Activated CD4-positive, alpha-beta memory T cell treated with anti-CD3 and anti-CD28 coated beads, Interleukin-2, amount 10 ng/mL, durations not matched to agents 7 days and 5 days (primary cell): ENCODE measurements at regions of chr6 and their contacts with region 1.

Region 1: GRCh38 chr6:125834348-125834747 is 43.6 kb downstream of the NCOA7 start:
- DNase-seq: no peak
- H3K4me3 Mint-ChIP-seq: no peak overlapping the region
- H3K27ac Mint-ChIP-seq: peak overlapping the region; percentile 11
- H3K4me1 Mint-ChIP-seq: peaks cover 53% of the 10 kb centered on the region
- H3K27me3 Mint-ChIP-seq: no peaks in the 10 kb centered on the region

Region 2: DNA sequence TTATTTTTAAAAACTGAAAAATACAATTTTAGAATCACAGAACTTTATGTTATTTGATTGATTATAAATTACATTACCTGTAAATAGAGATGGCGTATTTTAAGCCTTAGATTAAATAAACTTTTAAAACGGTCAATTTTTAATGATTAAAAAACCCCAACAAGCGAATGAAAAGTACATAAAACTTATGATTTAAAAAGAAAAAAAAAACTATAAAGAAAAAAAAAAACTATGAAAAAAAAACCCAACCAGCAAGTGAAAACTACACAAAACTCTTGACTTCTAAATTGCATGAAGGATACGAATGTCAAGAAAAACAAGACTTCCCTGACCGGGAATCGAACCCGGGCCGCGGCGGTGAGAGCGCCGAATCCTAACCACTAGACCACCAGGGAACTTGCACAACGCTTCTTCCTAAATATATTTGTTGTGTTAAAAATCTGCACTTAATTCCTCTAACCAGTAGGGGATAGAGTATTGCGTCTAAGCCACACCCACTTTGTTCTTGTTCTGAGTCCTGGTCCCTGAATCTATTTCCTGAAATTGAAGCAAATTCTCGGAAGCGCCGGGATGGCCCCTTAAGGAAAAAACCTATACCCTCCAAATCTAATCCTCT is 54.3 kb before region 1 on chr6:
- CTCF ChIA-PET with region 1: interaction called, 3 read pairs
- POLR2A ChIA-PET with region 1: interaction called, 10 read pairs
- DNase-seq: peak; percentile 86
- H3K4me3 Mint-ChIP-seq: no peak overlapping the region
- H3K27ac Mint-ChIP-seq: no peak overlapping the region
- H3K4me1 Mint-ChIP-seq: peaks cover 13% of the 10 kb centered on the region
- H3K27me3 Mint-ChIP-seq: peaks cover 18% of the 10 kb centered on the region